ENCODE measurements at regions of chr2 and their contacts with region 1.

Region 1: DNA sequence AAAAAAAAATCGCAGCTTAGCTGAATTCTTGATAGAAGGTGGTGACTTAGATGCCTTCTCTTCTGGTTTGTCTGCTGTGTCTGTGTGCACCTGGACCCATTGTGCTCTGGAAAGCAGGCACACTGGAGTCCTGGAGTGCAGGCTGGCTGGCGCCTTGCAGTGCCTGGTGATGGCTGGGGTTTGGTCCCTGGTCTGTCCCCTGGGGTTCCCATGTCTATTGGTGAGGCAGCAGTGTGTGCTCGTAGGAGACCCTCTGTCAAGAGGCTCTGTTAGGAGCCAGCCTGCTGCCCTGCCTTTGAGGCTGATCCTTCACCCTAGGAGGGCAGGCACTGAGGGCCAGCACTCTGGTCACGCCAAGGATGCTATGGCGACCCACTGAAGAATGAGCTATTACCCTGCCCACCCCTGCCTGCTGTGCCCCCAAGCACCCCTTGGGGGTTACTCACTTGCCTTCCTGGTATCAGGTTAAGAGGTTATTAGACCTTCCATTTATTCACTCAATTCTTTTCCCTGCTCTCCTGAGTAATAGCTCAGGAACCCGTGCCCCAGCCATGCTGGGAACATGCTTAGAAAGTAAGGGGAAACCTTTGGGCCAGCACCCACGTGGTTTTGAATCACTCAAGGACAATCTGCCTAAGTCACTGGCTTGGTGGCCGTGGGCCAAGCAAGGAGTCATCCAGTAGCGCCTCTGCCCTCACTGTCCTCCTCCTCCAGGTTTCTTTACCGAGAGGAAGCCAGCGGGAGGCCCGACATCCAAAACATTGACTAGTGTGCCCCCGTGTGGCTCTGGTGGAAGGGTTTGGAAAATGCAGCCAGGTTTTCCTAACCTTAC is 284.5 kb downstream of the PRKCE start:
- DNase-seq: peak; percentile 88
- H3K4me3 ChIP-seq: no peak overlapping the region
- H3K27ac ChIP-seq: peak overlapping the region; percentile 27 to 83 (median 64)
- H3K4me1 ChIP-seq: peaks cover 7 to 42% (median 20%) of the 10 kb centered on the region in 4 donors
- H3K27me3 ChIP-seq: no peaks in the 10 kb centered on the region
- CTCF ChIP-seq: peak; percentile 67 to 87 (median 68)
- EP300 ChIP-seq: peak; percentile 47
- POLR2A ChIP-seq: no peak

Region 2: DNA sequence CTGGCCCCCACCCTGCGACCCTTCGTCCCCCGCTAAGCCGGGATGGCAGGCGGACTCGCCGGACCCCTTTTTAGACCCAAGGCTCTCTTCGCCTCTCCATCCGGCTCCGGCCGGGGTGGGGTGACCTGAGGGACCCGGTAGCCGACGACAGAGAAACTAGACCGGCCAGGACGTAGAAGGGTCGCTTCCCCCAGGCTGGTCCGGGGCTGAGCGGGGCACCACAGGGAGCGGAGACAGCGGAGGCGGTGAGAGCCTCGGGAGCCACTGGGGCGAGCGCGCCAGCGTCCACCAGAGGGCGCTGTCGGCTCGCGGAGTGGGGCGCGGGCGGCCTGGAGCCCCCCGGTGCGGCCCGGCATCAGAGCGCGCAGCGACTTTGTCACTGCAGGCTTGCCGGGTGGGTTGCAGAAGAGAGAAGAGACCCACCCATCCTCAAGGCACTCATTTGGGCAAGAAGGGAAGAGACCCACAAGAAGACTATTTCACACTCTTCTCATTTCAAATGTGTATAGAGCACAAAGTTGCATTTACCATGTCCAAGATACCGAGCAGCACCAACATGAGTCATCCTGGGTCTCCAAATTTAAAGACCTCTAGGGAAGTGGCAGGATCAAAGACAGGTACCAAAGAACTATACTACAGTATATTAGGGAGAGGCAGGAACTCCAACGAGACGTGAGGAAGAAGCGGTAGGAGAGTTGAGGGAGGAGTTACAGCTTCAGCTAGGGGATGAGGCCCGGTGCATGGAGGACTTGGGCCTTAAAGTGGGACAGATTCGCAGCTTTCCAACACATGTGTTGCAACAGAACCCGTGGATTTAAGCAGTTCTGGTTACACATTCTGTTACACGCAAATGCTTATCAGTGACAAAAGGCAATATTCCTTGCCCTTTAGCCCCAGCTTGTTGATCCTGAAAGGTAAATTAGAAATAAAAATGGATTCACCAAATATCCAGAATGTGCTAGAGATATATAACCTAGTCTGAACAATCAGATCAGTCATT is 292.2 kb before region 1 on chr2:
- in situ Hi-C with region 1: loop called (anchors 5 to 10 kb)
- intact Hi-C with region 1: loop called (anchors 2 kb)
- DNase-seq: peak; percentile 71
- H3K4me3 ChIP-seq: peak overlapping the region; percentile 44 to 64 (median 52)
- H3K27ac ChIP-seq: peak overlapping the region in 2 of 4 donors; percentile 8 to 66
- H3K4me1 ChIP-seq: peaks cover 14 to 25% (median 19%) of the 10 kb centered on the region in 4 donors
- H3K27me3 ChIP-seq: peaks cover 14% of the 10 kb centered on the region
- CTCF ChIP-seq: peak; percentile 94 to 99 (median 98)
- EP300 ChIP-seq: no peak
- POLR2A ChIP-seq: no peak

Region 3: GRCh38 chr2:45650851-45651414 is 285.1 kb before region 1 on chr2:
- in situ Hi-C with region 1: loop called (anchors 5 to 10 kb)
- intact Hi-C with region 1: loop called (anchors 2 kb)
- DNase-seq: peak; percentile 95
- H3K4me3 ChIP-seq: peak overlapping the region; percentile 81 to 96 (median 90)
- H3K27ac ChIP-seq: peak overlapping the region; percentile 97 to 100 (median 99)
- H3K4me1 ChIP-seq: peaks cover 15 to 41% (median 29%) of the 10 kb centered on the region in 4 donors
- H3K27me3 ChIP-seq: no peaks in the 10 kb centered on the region
- CTCF ChIP-seq: peak; percentile 16 to 76 (median 39)
- EP300 ChIP-seq: peak; percentile 74
- POLR2A ChIP-seq: peak; percentile 93

Region 4: DNA sequence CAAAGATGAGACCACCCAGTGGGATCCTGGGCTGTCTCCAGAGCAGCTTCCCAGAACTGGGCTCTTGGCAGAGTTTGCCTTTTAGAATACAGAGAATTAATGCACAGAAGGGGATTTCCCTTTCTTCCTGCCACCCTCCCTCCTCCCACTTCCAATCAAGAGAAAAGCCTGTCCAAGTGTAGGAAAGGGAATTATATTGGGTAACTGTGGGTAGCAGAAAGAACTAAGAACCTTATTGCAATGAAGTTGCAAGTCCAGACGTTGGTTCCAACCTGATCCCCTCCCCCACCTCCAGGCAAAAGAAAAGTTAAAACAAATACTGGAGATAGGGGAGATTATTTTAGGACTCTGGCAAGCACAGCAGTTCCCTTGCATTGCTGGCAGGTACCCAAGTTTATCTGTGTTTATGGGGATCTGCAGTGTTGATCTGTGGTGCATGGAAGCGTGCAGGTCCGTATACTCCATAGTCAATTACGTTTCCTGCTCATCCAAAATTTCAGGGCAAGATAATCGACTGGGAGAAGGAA is 170.2 kb before region 1 on chr2:
- in situ Hi-C with region 1: no loop called
- intact Hi-C with region 1: loop called (anchors 5 kb)
- DNase-seq: peak; percentile 45
- H3K4me3 ChIP-seq: no peak overlapping the region
- H3K27ac ChIP-seq: peak overlapping the region in 2 of 4 donors; percentile 12 to 27
- H3K4me1 ChIP-seq: peaks cover 0 to 35% (median 14%) of the 10 kb centered on the region in 4 donors
- H3K27me3 ChIP-seq: no peaks in the 10 kb centered on the region
- CTCF ChIP-seq: no peak
- EP300 ChIP-seq: no peak
- POLR2A ChIP-seq: no peak

Region 5: DNA sequence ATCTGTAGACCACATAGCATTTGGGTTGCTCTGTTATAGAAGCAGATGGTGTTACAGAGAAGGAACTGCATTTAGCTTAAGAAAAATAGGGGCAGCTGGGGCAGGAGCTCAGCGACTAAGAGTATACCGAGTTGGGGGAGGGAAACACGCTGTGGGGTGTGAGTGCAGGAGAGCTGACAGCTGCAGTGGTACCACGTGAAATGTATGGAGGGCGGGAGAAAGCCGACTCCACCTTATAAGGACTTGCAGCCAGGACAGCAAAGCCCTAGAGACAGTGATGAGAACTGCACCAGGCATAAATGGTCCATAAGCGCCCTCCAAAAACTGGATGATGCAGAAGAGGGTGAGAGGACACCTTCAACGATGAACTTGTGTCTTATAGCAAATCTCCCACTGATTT is 47.0 kb before region 1 on chr2:
- in situ Hi-C with region 1: no loop called
- intact Hi-C with region 1: loop called (anchors 10 kb)
- DNase-seq: peak; percentile 32
- H3K4me3 ChIP-seq: no peak overlapping the region
- H3K27ac ChIP-seq: peak overlapping the region in 3 of 4 donors; percentile 23 to 62 (median 36)
- H3K4me1 ChIP-seq: peaks cover 23 to 80% (median 39%) of the 10 kb centered on the region in 4 donors
- H3K27me3 ChIP-seq: no peaks in the 10 kb centered on the region
- CTCF ChIP-seq: peak in 2 of 5 experiments; percentile 20 to 22
- EP300 ChIP-seq: no peak
- POLR2A ChIP-seq: no peak